PC-9 (cell line): ENCODE measurements at regions of chr13 and their contacts with region 1.

Region 1: GRCh38 chr13:98576963-98577822 is at the start of gene STK24:
- DNase-seq: peak; percentile 45 to 80
- H3K4me3 ChIP-seq: peak within 1 kb of the TSS; percentile 98
- H3K27ac ChIP-seq: peak within 1 kb of the TSS; percentile 93
- H3K4me1 ChIP-seq: peaks cover 49% of the 10 kb centered on the region
- H3K27me3 ChIP-seq: no peaks in the 10 kb centered on the region
- CTCF ChIP-seq: no peak
- total RNA-seq, gene STK24: 134 and 139 TPM in 2 replicates

Region 2: DNA sequence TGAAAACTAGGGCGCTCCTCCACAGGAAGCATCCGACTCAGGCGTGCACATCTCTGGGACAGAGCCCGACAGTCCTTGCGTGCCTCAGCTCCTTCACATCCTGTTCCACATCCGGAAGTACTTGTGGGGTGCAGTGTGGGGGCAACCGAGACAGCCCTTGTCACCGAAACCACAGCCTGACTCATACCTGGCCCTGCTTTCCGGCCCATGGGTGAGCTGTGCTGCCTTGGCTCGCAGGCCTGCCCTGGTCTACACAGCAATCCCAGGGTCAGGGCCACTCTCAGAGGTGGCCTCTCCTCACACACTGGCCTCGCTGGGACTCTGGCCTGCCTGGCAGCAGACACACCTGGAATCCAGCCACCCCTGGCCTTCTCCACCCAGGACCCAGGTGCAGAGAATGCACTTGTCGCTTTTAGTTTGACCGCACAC is 100.6 kb before region 1 on chr13:
- CTCF ChIA-PET with region 1: no interaction called
- POLR2A ChIA-PET with region 1: no interaction called
- intact Hi-C with region 1: loop called (anchors 1 kb)
- DNase-seq: peak; percentile 80 to 95
- H3K4me3 ChIP-seq: peak overlapping the region; percentile 20; the same call in 1 of the 2 replicates
- H3K27ac ChIP-seq: peak overlapping the region; percentile 94
- H3K4me1 ChIP-seq: peaks cover 44% of the 10 kb centered on the region
- H3K27me3 ChIP-seq: no peaks in the 10 kb centered on the region
- CTCF ChIP-seq: no peak